Heart left ventricle (tissue), 16 donors: ENCODE measurements at regions of chr19 and their contacts with region 1.

Region 1: DNA sequence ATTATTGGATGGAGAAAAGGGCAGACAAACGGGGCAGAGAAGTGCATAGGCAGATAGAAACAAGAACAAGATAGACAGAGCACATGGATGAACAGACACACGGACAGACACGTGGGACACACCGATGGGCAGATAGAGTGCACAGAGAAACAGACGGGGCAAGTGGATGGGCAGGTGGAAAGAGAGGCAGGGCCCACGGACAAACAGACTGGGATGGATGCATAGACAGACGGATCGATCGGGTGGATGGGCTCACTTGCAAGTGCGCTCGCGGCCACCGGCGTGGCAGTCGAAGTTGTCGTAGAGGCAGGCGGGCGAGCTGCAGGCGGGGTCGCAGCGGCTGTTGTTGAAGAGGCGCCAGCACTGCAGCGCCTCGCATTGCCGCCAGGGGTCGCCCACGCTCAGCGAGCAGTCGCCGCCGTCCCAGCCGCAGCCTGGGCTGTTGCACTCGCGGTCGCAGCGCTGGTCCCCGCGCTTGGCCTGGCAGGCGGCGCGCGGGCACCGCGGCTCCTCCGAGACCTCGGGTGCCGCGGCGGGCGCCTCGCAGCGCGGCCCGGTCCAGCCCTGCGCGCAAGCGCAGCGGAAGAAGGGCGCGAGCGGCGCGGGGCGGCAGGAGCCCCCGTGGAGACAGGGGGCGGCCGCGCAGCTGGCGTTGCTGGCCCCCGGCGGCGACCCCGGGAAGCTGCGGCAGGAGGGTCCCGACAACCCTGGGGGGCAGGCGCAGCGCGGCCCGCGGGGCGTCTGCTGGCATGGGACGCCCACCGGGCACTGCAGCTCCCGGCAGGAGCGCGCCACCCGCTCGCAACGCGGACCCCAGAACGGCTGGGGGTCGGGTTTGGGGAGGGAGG is 23.3 kb downstream of the NOTCH3 start:
- DNase-seq: peak; percentile 76 to 93 (median 82)
- ATAC-seq: peak; percentile 41 to 91 (median 82)
- H3K4me3 ChIP-seq: peak overlapping the region in 7 of 12 donors; percentile 20 to 47 (median 34)
- H3K27ac ChIP-seq: peak overlapping the region in 1 of 12 donors; percentile 40
- H3K4me1 ChIP-seq: peaks cover 0 to 23% (median 2%) of the 10 kb centered on the region in 12 donors
- H3K27me3 ChIP-seq: peaks cover 0 to 11% (median 4%) of the 10 kb centered on the region in 9 donors
- CTCF ChIP-seq: peak; percentile 83 to 99 (median 96)
- POLR2A ChIP-seq: no peak

Region 2: DNA sequence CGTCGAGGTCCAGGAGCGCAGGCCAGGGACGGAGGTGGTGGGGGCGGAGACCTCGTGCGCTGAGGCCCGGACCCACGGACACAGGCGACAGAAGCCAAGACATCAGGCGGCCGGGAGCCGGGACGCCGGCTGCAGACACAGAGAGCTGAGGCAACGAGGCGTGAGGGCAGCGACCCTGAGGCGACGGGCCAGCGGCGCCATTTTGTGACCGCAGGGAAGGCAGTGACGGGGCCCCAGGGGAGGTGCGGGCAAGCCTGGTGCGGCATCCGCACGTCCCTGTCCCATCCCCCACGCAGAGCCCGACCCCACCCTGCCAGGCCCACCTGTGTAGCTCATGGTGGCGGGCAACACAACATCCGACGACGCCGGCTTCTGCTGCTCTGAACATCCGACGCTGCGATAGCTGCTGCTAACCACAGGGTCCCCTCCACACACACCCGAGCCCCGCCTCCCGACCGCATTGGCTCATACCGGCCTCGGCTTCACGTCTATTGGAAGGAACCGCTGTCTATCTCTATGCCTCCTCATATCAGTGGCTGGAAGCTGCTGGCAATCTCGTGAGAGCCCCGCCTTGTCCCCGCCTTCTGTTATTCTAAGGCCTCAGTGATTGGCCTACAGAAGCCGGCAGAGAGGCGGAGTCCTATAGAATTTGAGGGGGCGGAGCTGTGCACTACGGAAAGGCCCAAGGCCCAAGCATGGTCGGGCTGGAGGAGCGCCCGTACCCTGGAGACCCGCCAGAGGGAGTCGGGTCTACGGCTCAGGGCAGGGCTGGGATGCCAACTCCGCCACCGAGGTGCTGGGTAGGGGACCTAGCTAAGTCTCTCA is 241.3 kb after region 1 on chr19 and contains the start of gene AKAP8L:
- intact Hi-C with region 1: loop called in 1 of 10 experiments (anchors 10 kb)
- DNase-seq: peak; percentile 98 to 100 (median 99)
- ATAC-seq: peak; percentile 95 to 98 (median 96)
- H3K4me3 ChIP-seq: peak within 1 kb of the TSS; percentile 75 to 100 (median 93)
- H3K27ac ChIP-seq: peak within 1 kb of the TSS; percentile 71 to 95 (median 91)
- H3K4me1 ChIP-seq: peaks cover 6 to 58% (median 39%) of the 10 kb centered on the region in 12 donors
- H3K27me3 ChIP-seq: no peaks in the 10 kb centered on the region
- CTCF ChIP-seq: peak; percentile 50 to 81 (median 63)
- POLR2A ChIP-seq: peak; percentile 53 to 91
- total RNA-seq, gene AKAP8L: 46.5 to 72.2 (median 60.1) TPM

Region 3: GRCh38 chr19:15456871-15457700 is 279.6 kb after region 1 on chr19:
- intact Hi-C with region 1: loop called in 1 of 10 experiments (anchors 5 kb)
- DNase-seq: no peak
- ATAC-seq: no peak
- H3K4me3 ChIP-seq: peak overlapping the region in 4 of 12 donors; percentile 6 to 32 (median 16)
- H3K27ac ChIP-seq: no peak overlapping the region
- H3K4me1 ChIP-seq: peaks cover 3 to 30% (median 12%) of the 10 kb centered on the region in 12 donors
- H3K27me3 ChIP-seq: peaks cover 12 to 46% (median 27%) of the 10 kb centered on the region in 9 donors
- CTCF ChIP-seq: no peak
- POLR2A ChIP-seq: no peak